ENCODE measurements at regions of chr11 and their contacts with region 1.

Region 1: GRCh38 chr11:17972987-17973386 is 39.9 kb downstream of the SERGEF start:
- DNase-seq: peak; percentile 93
- ATAC-seq: peak; percentile 99
- H3K4me3 ChIP-seq: no peak overlapping the region
- H3K27ac ChIP-seq: no peak overlapping the region
- H3K4me1 ChIP-seq: peaks cover 1% of the 10 kb centered on the region; the same call in 1 of the 2 replicates
- H3K27me3 ChIP-seq: no peaks in the 10 kb centered on the region
- CTCF ChIP-seq: peak; percentile 82
- POLR2A ChIP-seq: no peak
- RAD21 ChIP-seq: peak; percentile 90

Region 2: DNA sequence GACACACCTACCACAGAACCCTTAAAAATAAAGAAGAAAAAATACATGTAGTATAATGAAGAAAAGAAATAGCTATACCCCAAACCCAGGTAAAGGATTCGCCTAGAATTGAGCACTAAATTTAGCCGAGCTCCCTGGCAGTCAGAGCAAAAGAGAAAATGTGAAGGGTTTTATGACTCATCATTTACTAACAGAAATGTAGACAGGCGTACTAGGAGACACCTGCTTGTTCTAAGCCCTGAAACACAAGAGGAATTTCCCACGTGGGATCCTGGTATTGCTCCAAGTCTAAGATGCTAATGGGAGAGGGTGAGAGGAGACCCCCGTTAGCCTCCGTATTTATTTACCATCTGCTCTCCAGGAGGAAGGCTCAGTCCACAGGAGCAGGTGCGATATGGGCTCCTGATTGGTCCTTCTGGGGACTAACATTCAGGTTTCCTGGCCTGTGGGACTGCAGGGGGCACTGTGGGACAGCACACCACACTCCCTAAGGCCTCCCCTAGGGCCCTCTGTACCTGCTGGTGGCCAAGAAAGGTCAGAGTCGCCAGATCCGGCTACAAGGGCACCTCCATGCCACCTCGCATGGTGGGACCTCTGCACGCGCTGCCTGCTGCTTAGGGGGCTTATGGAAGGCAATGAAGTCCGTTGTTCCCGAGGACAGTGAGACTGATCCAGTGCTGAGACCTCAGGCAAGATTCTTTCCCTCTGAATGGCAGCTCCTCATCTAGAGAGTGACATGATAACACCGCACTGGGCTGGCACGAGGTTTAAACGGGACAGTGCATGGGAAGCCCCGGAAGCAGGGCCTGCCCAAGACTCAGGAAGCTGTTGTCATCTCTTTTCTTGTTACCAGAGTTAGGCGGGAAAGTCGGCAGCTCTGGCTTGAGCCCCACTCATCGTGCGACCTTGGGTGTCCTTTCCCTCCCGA is 212.6 kb before region 1 on chr11:
- CTCF ChIA-PET with region 1: interaction called, 21 read pairs
- POLR2A ChIA-PET with region 1: no interaction called
- dilution Hi-C with region 1: no loop called
- in situ Hi-C with region 1: loop called (anchors 5 kb)
- intact Hi-C with region 1: loop called (anchors 1 kb)
- DNase-seq: peak; percentile 39
- ATAC-seq: peak; percentile 91
- H3K4me3 ChIP-seq: no peak overlapping the region
- H3K27ac ChIP-seq: no peak overlapping the region
- H3K4me1 ChIP-seq: no peaks in the 10 kb centered on the region
- H3K27me3 ChIP-seq: peaks cover 13% of the 10 kb centered on the region; the same call in 1 of the 2 replicates
- CTCF ChIP-seq: peak; percentile 73
- POLR2A ChIP-seq: no peak
- RAD21 ChIP-seq: peak; percentile 83

Region 3: GRCh38 chr11:17986007-17986710 is 13.2 kb after region 1 on chr11:
- CTCF ChIA-PET with region 1: interaction called, 14 read pairs
- POLR2A ChIA-PET with region 1: no interaction called
- dilution Hi-C with region 1: no loop called
- in situ Hi-C with region 1: no loop called
- intact Hi-C with region 1: no loop called
- DNase-seq: peak; percentile 90
- ATAC-seq: peak; percentile 99
- H3K4me3 ChIP-seq: no peak overlapping the region
- H3K27ac ChIP-seq: no peak overlapping the region
- H3K4me1 ChIP-seq: peaks cover 7% of the 10 kb centered on the region; the same call in 1 of the 2 replicates
- H3K27me3 ChIP-seq: no peaks in the 10 kb centered on the region
- CTCF ChIP-seq: no peak
- POLR2A ChIP-seq: no peak
- RAD21 ChIP-seq: no peak

Region 4: GRCh38 chr11:18027475-18027874 is 54.5 kb after region 1 on chr11:
- CTCF ChIA-PET with region 1: no interaction called
- POLR2A ChIA-PET with region 1: no interaction called
- dilution Hi-C with region 1: no loop called
- in situ Hi-C with region 1: no loop called
- intact Hi-C with region 1: no loop called
- DNase-seq: no peak
- ATAC-seq: no peak; the same call in 1 of the 2 replicates
- H3K4me3 ChIP-seq: no peak overlapping the region
- H3K27ac ChIP-seq: no peak overlapping the region
- H3K4me1 ChIP-seq: no peaks in the 10 kb centered on the region
- H3K27me3 ChIP-seq: peaks cover 2% of the 10 kb centered on the region; the same call in 1 of the 2 replicates
- CTCF ChIP-seq: no peak
- POLR2A ChIP-seq: no peak
- RAD21 ChIP-seq: no peak

Region 5: DNA sequence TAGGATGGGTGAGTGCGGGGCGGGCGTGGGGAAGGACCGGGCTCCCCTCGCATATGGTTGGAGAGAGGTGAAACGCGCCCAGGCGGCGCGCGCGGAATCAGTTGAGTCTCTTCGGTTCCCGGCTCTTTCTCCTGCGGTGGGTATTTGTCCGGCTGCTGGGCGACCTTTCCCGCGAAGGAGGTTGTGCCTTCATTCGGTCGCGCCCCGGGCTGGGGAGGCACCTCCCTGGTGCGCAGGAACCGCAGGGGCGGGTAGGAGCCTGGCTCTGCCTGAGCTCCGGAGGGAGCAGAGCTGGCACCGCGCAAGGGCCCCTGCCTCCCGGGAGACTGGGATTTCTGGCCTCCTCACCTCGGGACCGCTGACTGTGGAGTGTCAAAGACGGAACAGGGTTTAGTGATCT is 236.1 kb after region 1 on chr11:
- CTCF ChIA-PET with region 1: interaction called, 10 read pairs
- POLR2A ChIA-PET with region 1: no interaction called
- dilution Hi-C with region 1: no loop called
- in situ Hi-C with region 1: no loop called
- intact Hi-C with region 1: no loop called
- DNase-seq: no peak
- ATAC-seq: no peak
- H3K4me3 ChIP-seq: no peak overlapping the region
- H3K27ac ChIP-seq: no peak overlapping the region
- H3K4me1 ChIP-seq: no peaks in the 10 kb centered on the region
- H3K27me3 ChIP-seq: peaks cover 7% of the 10 kb centered on the region
- CTCF ChIP-seq: no peak
- POLR2A ChIP-seq: no peak
- RAD21 ChIP-seq: no peak

Region 6: DNA sequence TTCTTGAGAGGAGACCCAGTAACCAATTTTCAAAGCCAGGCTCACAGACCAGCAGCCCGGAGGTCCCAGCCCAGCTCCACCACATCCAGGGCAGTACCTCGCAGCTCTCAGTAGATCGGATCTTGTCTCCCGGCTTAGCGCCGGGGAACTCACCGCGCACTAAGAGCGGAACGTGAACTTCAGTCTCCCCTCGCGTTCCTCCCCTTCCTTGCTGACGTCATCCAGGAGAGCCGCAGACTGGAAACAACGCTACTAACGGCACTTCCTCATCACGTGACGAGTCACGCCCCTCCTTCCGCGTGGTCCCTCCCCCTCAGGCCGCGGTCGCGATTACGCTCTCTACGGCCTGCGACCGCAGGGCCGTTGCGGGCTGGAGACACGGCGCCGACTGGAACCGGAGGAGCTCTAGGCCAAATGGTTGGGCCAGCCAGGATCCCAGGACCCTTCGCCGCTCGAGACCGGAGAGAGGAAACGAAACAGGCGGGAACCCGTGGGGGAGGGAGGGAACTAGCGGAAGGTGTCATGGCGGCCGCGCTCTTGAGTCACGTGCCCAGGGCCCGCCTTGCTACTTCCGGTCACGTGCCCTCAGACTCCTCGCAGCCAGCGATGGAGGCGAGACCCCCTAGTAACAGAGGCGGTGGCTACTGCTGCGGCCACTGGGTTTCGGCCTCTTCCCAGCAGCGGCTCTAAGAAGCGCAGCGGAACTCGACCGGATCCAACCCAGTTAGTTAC is 349.2 kb after region 1 on chr11 and contains the starts of genes GTF2H1 and HPS5:
- CTCF ChIA-PET with region 1: no interaction called
- POLR2A ChIA-PET with region 1: no interaction called
- dilution Hi-C with region 1: no loop called
- in situ Hi-C with region 1: no loop called
- intact Hi-C with region 1: no loop called
- DNase-seq: peak; percentile 99
- ATAC-seq: peak; percentile 94
- H3K4me3 ChIP-seq: peak within 1 kb of the TSS; percentile 77
- H3K27ac ChIP-seq: peak within 1 kb of the TSS; percentile 98
- H3K4me1 ChIP-seq: peaks cover 4% of the 10 kb centered on the region
- H3K27me3 ChIP-seq: no peaks in the 10 kb centered on the region
- CTCF ChIP-seq: no peak
- POLR2A ChIP-seq: peak; percentile 97
- RAD21 ChIP-seq: no peak
- total RNA-seq, gene GTF2H1: 67.0 and 72.8 TPM in 2 replicates
- total RNA-seq, gene HPS5: 28.3 and 34.7 TPM in 2 replicates

Measured in IMR-90 (cell line).